ENCODE measurements at regions of chr19 and their contacts with region 1.

Region 1: GRCh38 chr19:33416307-33417215 is 43.1 kb downstream of the CEBPG start:
- DNase-seq: peak; percentile 66
- H3K4me3 ChIP-seq: no peak overlapping the region
- H3K27ac ChIP-seq: no peak overlapping the region
- H3K4me1 ChIP-seq: no peaks in the 10 kb centered on the region
- CTCF ChIP-seq: peak; percentile 84

Region 2: DNA sequence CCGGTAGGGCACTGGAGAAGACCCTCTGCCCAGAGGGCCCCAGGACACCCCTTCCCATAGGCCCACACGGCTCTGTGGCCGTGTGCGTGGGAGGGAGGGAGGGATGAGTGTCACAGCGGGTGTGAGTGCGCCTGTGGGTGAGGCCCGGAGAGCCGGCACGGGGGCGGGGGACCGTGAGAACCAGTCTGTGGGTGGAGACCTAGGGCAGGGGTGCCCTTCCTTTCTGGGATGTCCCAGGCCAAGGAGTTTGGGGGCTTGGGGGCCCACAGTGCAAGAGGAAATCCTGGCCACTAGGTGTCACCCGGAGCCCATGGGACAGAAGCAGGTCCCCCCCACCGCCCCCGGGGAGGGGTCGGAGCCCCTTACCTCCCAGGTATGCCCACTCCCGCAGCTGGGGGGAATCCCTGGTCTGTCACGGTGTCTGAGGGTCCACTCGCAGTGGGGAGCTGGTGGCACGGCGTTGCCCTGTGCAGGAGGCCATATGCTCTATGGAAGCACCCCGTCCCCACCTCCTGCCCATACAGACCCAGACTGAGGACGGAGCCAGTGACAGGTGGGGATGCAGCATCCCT is 174.9 kb before region 1 on chr19:
- CTCF ChIA-PET with region 1: interaction called, 18 read pairs
- POLR2A ChIA-PET with region 1: no interaction called
- intact Hi-C with region 1: no loop called
- DNase-seq: peak; percentile 29
- H3K4me3 ChIP-seq: no peak overlapping the region
- H3K27ac ChIP-seq: no peak overlapping the region
- H3K4me1 ChIP-seq: no peaks in the 10 kb centered on the region
- CTCF ChIP-seq: peak; percentile 76